Endothelial cell of umbilical vein (primary cell): ENCODE measurements at regions of chr16 and their contacts with region 1.

Region 1: DNA sequence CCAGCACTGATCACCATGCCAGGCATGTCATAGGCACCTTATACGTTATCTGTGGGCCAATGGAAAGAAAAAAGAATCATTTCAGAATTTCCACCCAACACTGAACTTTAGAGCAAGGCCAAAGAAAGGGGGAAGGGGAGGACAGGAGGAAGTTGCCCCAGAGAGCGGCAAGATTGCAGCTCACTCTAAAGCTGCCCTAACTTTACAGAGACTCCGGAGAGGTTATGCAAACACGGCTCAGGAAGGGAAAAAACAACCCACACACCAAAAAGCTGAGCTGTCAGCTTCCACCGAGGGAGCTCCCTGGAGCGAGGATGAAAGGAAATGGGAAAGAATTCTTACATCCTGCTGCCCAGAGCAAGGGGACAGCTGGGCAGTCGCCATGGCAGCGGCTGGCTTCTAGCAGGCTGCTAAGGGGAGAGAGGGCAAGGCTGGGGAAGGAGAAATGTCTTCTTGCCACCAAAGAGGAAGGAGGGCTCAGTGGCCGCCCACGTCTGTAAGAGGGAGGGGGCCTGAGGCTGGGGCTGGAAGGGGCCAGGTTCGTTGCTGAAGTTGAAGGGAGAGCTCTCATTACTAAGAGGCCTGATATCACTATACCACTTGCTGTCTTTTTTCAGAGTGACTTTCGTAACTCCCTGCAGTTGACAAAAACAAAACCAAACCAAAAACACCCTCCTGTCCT is 18.2 kb downstream of the COTL1 start:
- DNase-seq: peak; percentile 91
- H3K4me3 ChIP-seq: peak overlapping the region in 1 of 3 experiments; percentile 43
- H3K27ac ChIP-seq: peak overlapping the region; percentile 82
- H3K4me1 ChIP-seq: peaks cover 62% of the 10 kb centered on the region
- H3K27me3 ChIP-seq: no peaks in the 10 kb centered on the region
- CTCF ChIP-seq: no peak
- POLR2A ChIP-seq: peak; percentile 51

Region 2: GRCh38 chr16:84504420-84505248 is 95.0 kb before region 1 on chr16 and contains the start of gene MEAK7:
- CTCF ChIA-PET with region 1: interaction called, 23 read pairs
- POLR2A ChIA-PET with region 1: no interaction called
- dilution Hi-C with region 1: loop called (anchors 25 kb)
- intact Hi-C with region 1: no loop called
- DNase-seq: peak; percentile 98
- H3K4me3 ChIP-seq: peak within 1 kb of the TSS; percentile 61 to 81 (median 62)
- H3K27ac ChIP-seq: peak within 1 kb of the TSS; percentile 38
- H3K4me1 ChIP-seq: peaks cover 10% of the 10 kb centered on the region
- H3K27me3 ChIP-seq: no peaks in the 10 kb centered on the region
- CTCF ChIP-seq: no peak
- POLR2A ChIP-seq: no peak
- total RNA-seq, gene MEAK7: 19.3 and 22.7 TPM in 2 replicates

Region 3: DNA sequence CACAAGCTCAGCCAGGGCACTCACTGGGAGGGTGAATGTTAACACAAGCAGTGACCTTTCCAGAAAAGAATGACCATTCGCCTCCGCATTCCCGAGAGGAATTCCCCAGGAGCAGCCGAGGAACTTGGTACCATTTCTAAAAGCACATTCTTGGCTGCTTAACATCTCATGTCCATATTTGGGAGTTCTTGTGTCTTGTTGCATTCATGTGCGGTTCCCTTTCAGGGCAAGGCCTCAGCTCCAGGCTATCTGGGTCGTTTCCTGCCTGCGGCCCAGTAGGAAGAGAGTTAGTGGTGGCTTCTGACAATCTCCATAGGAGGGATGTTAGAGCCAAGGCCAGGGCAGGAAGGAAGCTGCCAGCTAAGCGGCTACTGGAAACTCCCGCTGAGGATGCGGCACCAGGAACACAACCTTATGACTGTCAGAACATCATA is 67.4 kb before region 1 on chr16:
- CTCF ChIA-PET with region 1: interaction called, 6 read pairs
- POLR2A ChIA-PET with region 1: interaction called, 9 read pairs
- dilution Hi-C with region 1: no loop called
- intact Hi-C with region 1: loop called (anchors 2 kb)
- DNase-seq: peak; percentile 93
- H3K4me3 ChIP-seq: no peak overlapping the region
- H3K27ac ChIP-seq: peak overlapping the region; percentile 78
- H3K4me1 ChIP-seq: peaks cover 30% of the 10 kb centered on the region
- H3K27me3 ChIP-seq: no peaks in the 10 kb centered on the region
- CTCF ChIP-seq: no peak
- POLR2A ChIP-seq: peak; percentile 20

Region 4: GRCh38 chr16:84548971-84549844 is 50.5 kb before region 1 on chr16:
- CTCF ChIA-PET with region 1: interaction called, 4 read pairs
- POLR2A ChIA-PET with region 1: no interaction called
- dilution Hi-C with region 1: no loop called
- intact Hi-C with region 1: loop called (anchors 2 kb)
- DNase-seq: peak; percentile 62
- H3K4me3 ChIP-seq: no peak overlapping the region
- H3K27ac ChIP-seq: peak overlapping the region; percentile 78
- H3K4me1 ChIP-seq: peaks cover 18% of the 10 kb centered on the region
- H3K27me3 ChIP-seq: no peaks in the 10 kb centered on the region
- CTCF ChIP-seq: no peak
- POLR2A ChIP-seq: peak; percentile 34

Region 5: GRCh38 chr16:84611041-84611440 is 11.4 kb after region 1 on chr16:
- CTCF ChIA-PET with region 1: no interaction called
- POLR2A ChIA-PET with region 1: no interaction called
- dilution Hi-C with region 1: no loop called
- intact Hi-C with region 1: no loop called
- DNase-seq: no peak
- H3K4me3 ChIP-seq: no peak overlapping the region
- H3K27ac ChIP-seq: no peak overlapping the region
- H3K4me1 ChIP-seq: peaks cover 16% of the 10 kb centered on the region
- H3K27me3 ChIP-seq: no peaks in the 10 kb centered on the region
- CTCF ChIP-seq: no peak
- POLR2A ChIP-seq: no peak